Common myeloid progenitor, CD34-positive (primary cell): ENCODE measurements at regions of chr4 and their contacts with region 1.

Region 1: DNA sequence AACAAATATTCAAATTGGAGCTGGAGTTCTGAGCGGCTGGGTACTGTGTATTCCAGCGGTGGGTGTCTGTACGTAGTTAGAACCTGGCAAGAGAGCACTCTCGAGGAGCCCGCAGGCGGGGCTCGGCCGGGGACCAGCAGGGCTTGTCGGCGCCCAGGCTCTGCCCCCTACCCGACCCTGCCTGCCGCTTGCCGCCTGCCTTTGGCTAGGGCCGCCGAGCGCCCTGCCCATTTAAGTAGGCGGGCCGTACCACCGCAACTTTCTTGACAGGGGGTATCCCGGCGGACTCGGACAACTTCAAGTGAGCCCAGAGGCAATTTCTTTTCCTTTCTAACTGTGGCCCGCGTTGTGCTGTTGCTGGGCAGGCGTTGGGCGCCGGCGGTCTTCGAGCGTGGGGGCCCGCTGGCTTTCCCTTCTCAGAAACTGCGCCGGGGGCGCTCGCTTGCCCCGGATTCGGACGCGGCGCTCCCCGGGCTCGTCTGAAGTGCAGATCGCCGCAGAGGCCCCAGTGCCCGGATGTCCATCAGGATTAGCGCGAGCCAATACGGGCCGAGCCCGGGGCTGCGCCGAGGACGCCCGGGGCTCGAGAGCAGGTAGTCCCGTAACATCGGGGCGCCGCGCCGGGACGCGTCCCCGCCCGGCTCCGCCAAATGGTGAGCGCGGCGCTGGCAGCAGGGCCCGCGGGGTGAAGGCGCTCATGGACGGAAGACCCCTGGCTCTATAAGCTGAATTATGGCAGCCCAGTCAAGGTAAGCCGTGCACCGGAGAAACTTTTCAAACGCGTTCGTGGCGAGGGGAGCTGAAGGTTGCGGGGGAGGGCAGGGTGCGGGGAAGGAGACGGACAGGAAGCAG is 72.1 kb downstream of the AFF1 start:
- DNase-seq: peak; percentile 95 to 98 (median 98)
- H3K4me3 ChIP-seq: peak overlapping the region; percentile 90 to 100 (median 96)
- H3K27ac ChIP-seq: peak overlapping the region; percentile 83 to 95
- H3K4me1 ChIP-seq: peaks cover 34 to 61% (median 52%) of the 10 kb centered on the region in 4 experiments
- H3K27me3 ChIP-seq: no peaks in the 10 kb centered on the region

Region 2: GRCh38 chr4:86730310-86730709 is 276.6 kb before region 1 on chr4:
- CTCF ChIA-PET with region 1: no interaction called
- POLR2A ChIA-PET with region 1: no interaction called
- DNase-seq: no peak
- H3K4me3 ChIP-seq: no peak overlapping the region
- H3K27ac ChIP-seq: no peak overlapping the region
- H3K4me1 ChIP-seq: no peaks in the 10 kb centered on the region
- H3K27me3 ChIP-seq: no peaks in the 10 kb centered on the region

Region 3: GRCh38 chr4:86924811-86925210 is 82.1 kb before region 1 on chr4:
- CTCF ChIA-PET with region 1: interaction called, 25 read pairs
- POLR2A ChIA-PET with region 1: interaction called, 5 read pairs
- DNase-seq: peak in 2 of 3 donors; percentile 67 to 84
- H3K4me3 ChIP-seq: no peak overlapping the region
- H3K27ac ChIP-seq: peak overlapping the region in 1 of 2 experiments; percentile 19
- H3K4me1 ChIP-seq: peaks cover 13 to 54% (median 35%) of the 10 kb centered on the region in 4 experiments
- H3K27me3 ChIP-seq: no peaks in the 10 kb centered on the region

Region 4: DNA sequence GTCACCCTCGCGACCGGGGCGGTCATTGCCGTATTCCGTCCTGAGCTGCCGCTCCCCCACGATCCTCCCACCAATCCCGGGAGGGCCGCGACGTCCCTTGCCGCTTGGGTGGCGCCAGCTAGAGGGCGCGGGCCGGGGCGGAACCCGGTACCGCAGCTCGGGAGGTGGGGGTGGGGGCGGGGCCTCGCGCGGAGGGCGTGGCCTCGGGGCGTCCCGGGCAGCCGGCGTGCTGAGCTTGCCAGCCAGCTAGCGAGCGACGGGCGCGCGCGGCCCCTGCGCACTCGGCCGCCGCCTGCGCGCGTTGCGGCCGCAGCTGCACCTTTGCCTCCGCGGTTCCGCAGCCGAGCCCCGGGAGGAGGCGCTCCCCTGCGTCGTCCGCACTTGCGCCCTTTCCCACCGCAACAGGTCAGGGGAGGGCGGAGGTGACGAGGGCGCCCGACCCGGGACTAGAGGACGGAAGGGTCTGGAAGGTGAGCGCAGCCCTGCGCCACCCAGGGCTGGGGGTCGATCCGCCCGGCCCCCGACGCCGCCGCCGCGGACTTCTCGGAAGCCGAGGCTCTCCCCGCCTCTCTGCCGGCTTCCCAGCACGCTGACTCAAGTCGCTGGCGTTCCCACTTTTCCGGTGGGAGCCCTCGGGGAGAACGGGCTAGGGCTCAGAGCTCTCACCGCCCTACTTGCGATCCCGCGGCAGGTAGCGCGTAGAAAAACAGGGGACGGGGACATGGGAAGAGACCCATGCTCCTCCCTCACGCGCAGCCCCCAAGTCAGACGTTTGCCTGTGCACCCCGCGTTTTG is 71.9 kb before region 1 on chr4 and contains the start of gene AFF1:
- CTCF ChIA-PET with region 1: interaction called, 57 read pairs
- POLR2A ChIA-PET with region 1: interaction called, 26 read pairs
- DNase-seq: peak; percentile 98
- H3K4me3 ChIP-seq: peak within 1 kb of the TSS; percentile 79 to 97 (median 95)
- H3K27ac ChIP-seq: peak within 1 kb of the TSS; percentile 73 to 94
- H3K4me1 ChIP-seq: peaks cover 24 to 54% (median 41%) of the 10 kb centered on the region in 4 experiments
- H3K27me3 ChIP-seq: no peaks in the 10 kb centered on the region

Region 5: DNA sequence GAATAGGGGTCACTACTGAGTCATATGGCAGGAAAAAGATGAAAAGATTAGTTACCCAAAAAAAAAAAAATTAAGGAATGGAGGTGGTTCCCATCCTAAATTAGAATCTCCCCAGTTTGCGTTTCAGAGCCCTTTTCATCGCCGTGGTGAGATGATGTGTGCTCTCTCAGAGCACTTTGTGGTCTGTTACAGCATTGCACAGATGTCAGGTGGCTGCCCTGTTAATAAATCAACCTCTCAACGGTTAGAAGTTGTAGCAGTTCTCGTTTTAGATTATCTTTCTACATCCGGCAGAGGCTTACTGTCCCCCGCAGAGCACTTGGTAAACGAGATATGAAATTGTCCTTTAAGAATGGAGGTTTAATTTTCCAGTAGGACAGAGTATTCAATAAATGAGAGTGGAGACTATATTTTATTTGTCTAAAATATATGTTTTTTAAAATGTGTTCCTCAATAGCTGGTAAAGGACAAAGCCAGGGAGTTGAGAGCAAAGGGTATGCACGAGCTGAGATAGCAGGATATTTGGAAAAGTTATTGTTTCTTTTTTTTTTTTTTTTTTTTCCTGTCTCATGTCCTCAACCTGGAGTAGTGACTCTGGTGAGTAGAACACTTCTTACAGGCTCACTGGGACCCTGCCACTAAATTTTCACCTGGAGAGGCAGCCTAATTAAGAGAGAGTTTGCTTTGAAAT is 45.2 kb before region 1 on chr4:
- CTCF ChIA-PET with region 1: interaction called, 7 read pairs
- POLR2A ChIA-PET with region 1: interaction called, 17 read pairs
- DNase-seq: peak; percentile 91 to 98 (median 96)
- H3K4me3 ChIP-seq: peak overlapping the region in 4 of 7 experiments; percentile 49 to 55 (median 52)
- H3K27ac ChIP-seq: peak overlapping the region; percentile 73 to 88
- H3K4me1 ChIP-seq: peaks cover 62 to 87% (median 75%) of the 10 kb centered on the region in 4 experiments
- H3K27me3 ChIP-seq: no peaks in the 10 kb centered on the region

Region 6: DNA sequence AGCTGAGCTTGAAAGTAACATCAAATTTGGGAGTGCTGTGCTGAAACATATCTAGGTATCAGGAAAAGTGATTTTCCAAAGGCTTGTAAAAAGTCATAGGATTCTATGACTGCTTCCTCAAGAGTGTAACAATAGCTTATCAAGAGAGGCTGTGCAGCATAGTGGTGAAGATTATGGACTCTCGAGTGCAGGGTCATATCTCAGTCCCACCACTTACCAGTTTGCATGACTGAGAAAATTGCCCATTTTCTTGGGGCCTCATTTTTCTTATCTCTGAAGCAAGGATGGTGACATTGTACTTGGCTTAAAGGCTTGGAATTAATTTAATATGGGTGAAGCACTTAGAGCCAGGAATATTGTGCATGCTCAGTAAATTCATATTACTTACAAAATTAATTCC is 14.9 kb before region 1 on chr4:
- CTCF ChIA-PET with region 1: interaction called, 14 read pairs
- POLR2A ChIA-PET with region 1: interaction called, 5 read pairs
- DNase-seq: no peak
- H3K4me3 ChIP-seq: no peak overlapping the region
- H3K27ac ChIP-seq: no peak overlapping the region
- H3K4me1 ChIP-seq: peaks cover 0 to 14% (median 3%) of the 10 kb centered on the region in 4 experiments
- H3K27me3 ChIP-seq: no peaks in the 10 kb centered on the region

Region 7: DNA sequence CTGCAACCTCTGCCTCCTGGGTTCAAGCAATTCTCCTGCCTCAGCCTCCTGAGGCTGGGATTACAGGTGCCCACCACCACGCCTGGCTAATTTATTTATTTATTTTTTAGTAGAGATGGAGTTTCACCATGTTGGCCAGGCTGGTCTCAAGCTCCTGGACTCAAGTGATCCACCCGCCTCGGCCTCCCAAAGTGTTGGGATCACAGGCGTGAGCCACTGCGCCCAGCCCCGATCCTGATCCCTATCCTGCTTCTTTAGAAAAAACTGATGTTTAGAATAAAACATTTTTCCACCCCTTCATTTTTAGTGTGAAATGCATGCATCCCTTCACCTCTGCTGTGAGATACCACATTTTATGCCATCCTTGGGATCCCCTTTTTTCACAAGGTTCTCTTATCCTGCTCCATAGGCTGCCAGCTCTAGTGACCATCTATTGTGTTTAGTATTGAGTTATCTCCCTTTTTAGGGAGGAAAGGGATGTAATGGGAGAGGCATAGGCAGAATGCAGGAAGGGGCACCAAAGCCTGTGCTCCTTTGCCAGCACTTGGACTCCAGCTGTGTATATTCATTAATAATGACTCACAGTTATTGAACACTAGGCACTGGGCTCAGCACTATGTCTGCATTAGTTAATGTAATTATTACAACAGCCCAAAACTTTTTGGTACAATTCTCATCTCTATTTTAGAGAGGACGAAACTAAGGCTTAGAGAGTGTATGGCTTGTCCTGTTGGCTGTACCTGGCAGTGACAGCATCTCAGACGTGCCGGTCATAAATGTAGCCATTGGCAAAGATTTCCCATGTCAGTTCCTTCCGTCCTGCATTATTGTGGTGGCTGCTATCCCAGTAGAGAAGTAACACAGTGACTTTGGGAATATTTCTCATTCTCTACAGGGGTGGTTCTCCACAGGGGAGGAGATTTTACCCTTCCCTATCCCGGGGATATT is 18.0 kb after region 1 on chr4:
- CTCF ChIA-PET with region 1: interaction called, 11 read pairs
- POLR2A ChIA-PET with region 1: interaction called, 5 read pairs
- DNase-seq: no peak
- H3K4me3 ChIP-seq: no peak overlapping the region
- H3K27ac ChIP-seq: no peak overlapping the region
- H3K4me1 ChIP-seq: peaks cover 15 to 52% (median 38%) of the 10 kb centered on the region in 4 experiments
- H3K27me3 ChIP-seq: no peaks in the 10 kb centered on the region

Region 8: GRCh38 chr4:87053802-87054767 is 47.2 kb after region 1 on chr4:
- CTCF ChIA-PET with region 1: interaction called, 21 read pairs
- POLR2A ChIA-PET with region 1: no interaction called
- DNase-seq: peak; percentile 77 to 90 (median 84)
- H3K4me3 ChIP-seq: peak overlapping the region in 4 of 7 experiments; percentile 21 to 56 (median 44)
- H3K27ac ChIP-seq: peak overlapping the region; percentile 73 to 87
- H3K4me1 ChIP-seq: peaks cover 26 to 83% (median 60%) of the 10 kb centered on the region in 4 experiments
- H3K27me3 ChIP-seq: no peaks in the 10 kb centered on the region